BJ (cell line): ENCODE measurements at regions of chr12 and their contacts with region 1.

Region 1: GRCh38 chr12:115155665-115156645 is 472.0 kb upstream of the TBX3 start:
- DNase-seq: peak; percentile 99
- H3K4me3 ChIP-seq: no peak overlapping the region
- H3K27me3 ChIP-seq: no peaks in the 10 kb centered on the region
- CTCF ChIP-seq: no peak

Region 2: DNA sequence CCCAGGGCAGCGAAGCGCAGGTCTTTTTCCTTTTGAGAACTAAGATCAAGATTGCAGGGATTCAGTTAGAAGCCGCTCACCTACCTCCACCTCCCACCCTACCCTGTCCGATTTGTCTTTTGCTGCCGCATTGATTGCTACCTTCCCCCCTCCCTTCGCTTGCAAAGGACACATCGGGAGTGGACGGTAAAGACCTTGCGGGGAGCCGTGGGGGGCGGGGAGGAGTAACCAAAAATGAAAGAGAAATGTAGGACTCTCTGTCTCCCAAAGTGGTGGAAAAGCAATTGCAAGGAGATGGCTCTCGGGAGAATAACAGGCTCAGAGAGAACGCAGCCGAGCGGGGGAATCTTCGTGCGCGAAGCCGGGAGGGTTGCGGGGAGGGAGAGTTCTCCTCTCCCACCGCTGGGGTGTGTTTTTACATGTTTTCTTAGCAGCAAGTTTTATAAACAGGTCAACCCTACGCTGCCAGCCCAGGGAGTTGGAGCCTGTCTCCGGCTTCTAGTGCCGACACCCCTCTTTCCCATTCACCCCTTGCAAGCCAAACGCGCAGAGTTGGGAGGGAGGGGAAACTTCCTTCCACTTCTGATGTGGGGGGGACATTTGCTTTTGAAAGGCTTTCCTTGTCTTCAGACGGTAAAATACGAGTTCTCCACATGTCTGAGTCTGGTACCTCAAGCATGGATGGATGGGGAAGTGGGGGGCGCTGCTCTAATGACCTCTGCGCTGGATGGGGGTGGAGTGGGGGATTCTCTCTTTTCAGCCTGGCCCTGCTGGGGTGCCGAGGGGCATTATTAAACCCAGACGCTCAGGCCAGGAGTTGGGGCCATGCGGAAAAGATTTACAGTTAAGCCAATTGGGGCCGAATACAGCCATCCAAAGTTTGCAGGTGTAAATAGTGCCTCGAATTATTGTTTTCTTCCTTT is 463.1 kb before region 1 on chr12:
- CTCF ChIA-PET with region 1: no interaction called
- POLR2A ChIA-PET with region 1: interaction called, 19 read pairs
- DNase-seq: no peak
- H3K4me3 ChIP-seq: peak overlapping the region; percentile 63
- H3K27me3 ChIP-seq: no peaks in the 10 kb centered on the region
- CTCF ChIP-seq: peak; percentile 51

Region 3: GRCh38 chr12:114746686-114747520 is 409.1 kb before region 1 on chr12:
- CTCF ChIA-PET with region 1: no interaction called
- POLR2A ChIA-PET with region 1: interaction called, 14 read pairs
- DNase-seq: peak; percentile 63
- H3K4me3 ChIP-seq: no peak overlapping the region
- H3K27me3 ChIP-seq: no peaks in the 10 kb centered on the region
- CTCF ChIP-seq: no peak

Region 4: DNA sequence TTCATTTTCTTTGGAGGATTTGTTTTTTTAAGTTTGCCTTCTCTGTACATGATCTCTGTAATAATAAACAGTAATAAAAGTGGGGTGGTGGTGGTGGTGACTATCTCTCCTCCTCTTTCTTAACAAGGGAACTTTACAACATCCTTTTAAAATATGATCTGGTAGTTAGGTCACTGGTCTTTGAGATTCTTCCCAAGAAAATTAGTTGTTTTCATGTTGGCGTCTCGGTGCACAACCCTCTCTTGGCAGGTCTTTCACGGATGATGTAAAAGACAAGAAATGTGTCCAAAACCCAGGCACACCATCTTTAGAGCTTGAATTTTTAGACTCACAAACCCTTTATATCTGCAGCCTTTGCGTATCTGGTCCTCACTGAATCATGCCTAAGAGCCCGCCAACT is 16.6 kb after region 1 on chr12:
- CTCF ChIA-PET with region 1: interaction called, 5 read pairs
- POLR2A ChIA-PET with region 1: interaction called, 11 read pairs
- DNase-seq: peak; percentile 96
- H3K4me3 ChIP-seq: no peak overlapping the region
- H3K27me3 ChIP-seq: no peaks in the 10 kb centered on the region
- CTCF ChIP-seq: no peak

Region 5: GRCh38 chr12:115303723-115304309 is 147.9 kb after region 1 on chr12:
- CTCF ChIA-PET with region 1: no interaction called
- POLR2A ChIA-PET with region 1: no interaction called
- DNase-seq: no peak
- H3K4me3 ChIP-seq: no peak overlapping the region
- H3K27me3 ChIP-seq: no peaks in the 10 kb centered on the region
- CTCF ChIP-seq: no peak

Region 6: GRCh38 chr12:115468087-115468510 is 312.1 kb after region 1 on chr12:
- CTCF ChIA-PET with region 1: no interaction called
- POLR2A ChIA-PET with region 1: no interaction called
- DNase-seq: no peak
- H3K4me3 ChIP-seq: no peak overlapping the region
- H3K27me3 ChIP-seq: no peaks in the 10 kb centered on the region
- CTCF ChIP-seq: peak; percentile 33

Region 7: GRCh38 chr12:115598871-115599811 is 443.2 kb after region 1 on chr12:
- CTCF ChIA-PET with region 1: no interaction called
- POLR2A ChIA-PET with region 1: no interaction called
- DNase-seq: no peak
- H3K4me3 ChIP-seq: no peak overlapping the region
- H3K27me3 ChIP-seq: no peaks in the 10 kb centered on the region
- CTCF ChIP-seq: no peak

Region 8: DNA sequence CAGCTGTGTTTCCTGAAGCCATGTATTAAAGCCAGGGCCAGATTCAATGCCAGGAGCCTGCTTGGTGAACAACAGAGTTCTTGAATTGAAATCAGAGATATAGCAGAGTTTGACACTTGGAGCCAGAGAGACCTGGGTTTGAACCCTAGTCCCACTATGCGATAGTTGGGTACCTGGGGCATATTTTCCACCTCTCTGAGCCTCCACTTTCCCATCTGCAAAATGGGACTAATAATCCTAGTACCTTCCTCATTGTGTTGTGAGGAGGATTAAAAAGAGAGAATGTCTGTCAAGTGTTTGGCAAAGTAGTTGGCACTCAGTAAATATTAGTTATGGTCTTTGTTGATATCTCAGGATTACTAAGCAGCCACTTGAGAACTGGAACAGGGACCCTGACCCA is 1731.3 kb after region 1 on chr12:
- CTCF ChIA-PET with region 1: no interaction called
- POLR2A ChIA-PET with region 1: interaction called, 12 read pairs
- DNase-seq: no peak
- H3K4me3 ChIP-seq: no peak overlapping the region
- H3K27me3 ChIP-seq: peaks cover 24% of the 10 kb centered on the region
- CTCF ChIP-seq: no peak